Naive thymus-derived CD4-positive, alpha-beta T cell (primary cell): ENCODE measurements at regions of chr3 and their contacts with region 1.

Region 1: DNA sequence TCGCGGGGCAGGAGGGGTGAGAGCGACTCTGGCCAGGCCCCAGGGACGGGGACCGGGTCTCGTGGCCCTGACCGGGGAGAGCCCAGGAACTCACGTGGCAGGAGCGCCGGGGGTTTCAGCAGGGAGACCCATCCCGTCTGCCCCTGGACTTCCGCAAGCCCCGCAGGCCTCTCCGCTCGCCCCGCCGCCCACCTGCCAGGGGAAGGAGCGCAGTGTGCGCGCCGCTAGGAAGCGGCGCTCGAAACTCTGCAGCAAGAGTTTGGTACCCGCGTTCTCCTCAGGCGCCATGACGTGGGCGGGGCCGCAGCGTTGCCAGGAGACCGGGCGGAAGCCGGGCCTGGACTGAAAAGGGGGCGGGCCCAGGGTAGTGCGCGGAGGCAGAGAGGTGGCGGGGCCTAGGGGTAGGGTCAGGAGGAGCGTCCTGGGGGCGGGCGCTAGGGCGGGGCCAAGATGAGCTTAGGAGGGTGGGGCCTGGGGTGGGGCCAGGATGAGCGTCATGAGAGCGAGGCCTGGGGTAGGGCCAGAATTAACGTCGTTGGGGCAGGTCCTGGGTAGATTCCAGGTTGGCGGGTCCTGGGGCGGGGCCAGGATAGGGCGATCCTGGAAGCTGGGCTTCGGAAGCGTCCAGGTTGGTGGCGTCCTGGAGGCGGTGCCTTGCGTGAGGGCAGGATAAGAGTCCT is 29.7 kb downstream of the ALG1L2 start:
- DNase-seq: peak; percentile 96 to 99 (median 98)
- ATAC-seq: peak; percentile 100
- H3K4me3 ChIP-seq: peak overlapping the region; percentile 58
- H3K4me3 Mint-ChIP-seq: peak overlapping the region; percentile 85 to 100 (median 98)
- H3K27ac ChIP-seq: peak overlapping the region; percentile 90
- H3K27ac Mint-ChIP-seq: peak overlapping the region; percentile 91 to 100 (median 100)
- H3K4me1 ChIP-seq: no peaks in the 10 kb centered on the region
- H3K4me1 Mint-ChIP-seq: peaks cover 11 to 22% (median 13%) of the 10 kb centered on the region in 7 donors
- H3K27me3 ChIP-seq: no peaks in the 10 kb centered on the region
- H3K27me3 Mint-ChIP-seq: peaks cover 0 to 14% (median 0%) of the 10 kb centered on the region in 5 donors

Region 2: GRCh38 chr3:129399145-129399894 is 712.0 kb before region 1 on chr3:
- CTCF ChIA-PET with region 1: no interaction called
- POLR2A ChIA-PET with region 1: no interaction called
- intact Hi-C with region 1: loop called in 1 of 2 experiments (anchors 1 kb)
- DNase-seq: peak; percentile 34 to 89 (median 81)
- ATAC-seq: peak; percentile 91
- H3K4me3 ChIP-seq: peak overlapping the region; percentile 70
- H3K4me3 Mint-ChIP-seq: peak overlapping the region; percentile 89 to 100 (median 97)
- H3K27ac ChIP-seq: peak overlapping the region; percentile 88
- H3K27ac Mint-ChIP-seq: peak overlapping the region; percentile 94 to 100 (median 98)
- H3K4me1 ChIP-seq: peaks cover 10 to 13% of the 10 kb centered on the region in 2 donors
- H3K4me1 Mint-ChIP-seq: peaks cover 23 to 47% (median 37%) of the 10 kb centered on the region in 7 donors
- H3K27me3 ChIP-seq: no peaks in the 10 kb centered on the region
- H3K27me3 Mint-ChIP-seq: no peaks in the 10 kb centered on the region

Region 3: GRCh38 chr3:129606636-129607390 is 504.5 kb before region 1 on chr3 and contains the start of gene PLXND1:
- CTCF ChIA-PET with region 1: no interaction called
- POLR2A ChIA-PET with region 1: no interaction called
- intact Hi-C with region 1: loop called in 1 of 2 experiments (anchors 5 kb)
- DNase-seq: peak in 5 of 9 donors; percentile 14 to 49 (median 25)
- ATAC-seq: peak; percentile 76
- H3K4me3 ChIP-seq: peak within 1 kb of the TSS; percentile 53
- H3K4me3 Mint-ChIP-seq: peak within 1 kb of the TSS; percentile 89 to 98 (median 93)
- H3K27ac ChIP-seq: peak within 1 kb of the TSS; percentile 51
- H3K27ac Mint-ChIP-seq: peak within 1 kb of the TSS; percentile 35 to 92 (median 84)
- H3K4me1 ChIP-seq: peaks cover 0 to 6% of the 10 kb centered on the region in 2 donors
- H3K4me1 Mint-ChIP-seq: peaks cover 11 to 25% (median 14%) of the 10 kb centered on the region in 7 donors
- H3K27me3 ChIP-seq: peaks cover 0 to 6% of the 10 kb centered on the region in 2 donors
- H3K27me3 Mint-ChIP-seq: peaks cover 8 to 64% (median 11%) of the 10 kb centered on the region in 5 donors
- total RNA-seq, gene PLXND1: 1.9 to 82.5 (median 7.5) TPM

Region 4: DNA sequence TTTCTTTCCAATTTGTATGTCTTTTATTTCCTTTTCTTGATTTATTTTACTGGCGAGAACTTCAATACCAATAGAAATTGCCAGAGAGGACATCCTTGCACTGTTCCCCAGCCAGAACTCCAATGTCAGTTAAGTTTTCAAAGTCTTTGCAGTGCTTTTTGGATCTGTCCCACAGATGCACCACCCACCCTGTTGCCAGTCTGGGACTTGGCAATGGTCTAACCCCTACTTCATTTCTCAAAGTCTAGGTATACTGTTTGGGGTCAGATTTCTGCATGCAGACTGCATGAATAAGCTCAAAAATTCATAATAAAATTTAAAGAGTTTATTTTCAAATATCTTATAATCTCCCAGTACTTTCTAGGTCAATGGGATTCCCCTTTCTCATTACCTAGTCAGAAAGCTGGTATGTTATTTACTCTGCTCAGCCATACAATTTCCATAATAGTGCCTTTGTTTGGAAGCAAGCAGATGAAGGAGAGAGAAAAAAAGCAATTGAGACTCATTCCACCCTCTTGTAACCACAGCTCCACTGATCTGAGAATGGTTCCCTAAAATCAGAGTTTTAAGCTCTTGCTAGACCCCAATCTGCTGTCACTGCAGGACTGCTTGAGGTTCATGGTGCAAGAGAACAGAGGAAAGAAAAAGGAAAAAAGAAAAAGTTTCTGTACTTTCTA is 379.0 kb before region 1 on chr3:
- CTCF ChIA-PET with region 1: no interaction called
- POLR2A ChIA-PET with region 1: no interaction called
- intact Hi-C with region 1: no loop called
- DNase-seq: no peak
- ATAC-seq: no peak
- H3K4me3 ChIP-seq: no peak overlapping the region
- H3K4me3 Mint-ChIP-seq: no peak overlapping the region
- H3K27ac ChIP-seq: no peak overlapping the region
- H3K27ac Mint-ChIP-seq: no peak overlapping the region
- H3K4me1 ChIP-seq: no peaks in the 10 kb centered on the region
- H3K4me1 Mint-ChIP-seq: no peaks in the 10 kb centered on the region
- H3K27me3 ChIP-seq: no peaks in the 10 kb centered on the region
- H3K27me3 Mint-ChIP-seq: no peaks in the 10 kb centered on the region

Region 5: GRCh38 chr3:129942296-129942695 is 169.0 kb before region 1 on chr3:
- CTCF ChIA-PET with region 1: no interaction called
- POLR2A ChIA-PET with region 1: no interaction called
- intact Hi-C with region 1: loop called in 1 of 2 experiments (anchors 5 kb)
- DNase-seq: peak in 3 of 9 donors; percentile 14 to 18 (median 17)
- ATAC-seq: peak; percentile 78
- H3K4me3 ChIP-seq: no peak overlapping the region
- H3K4me3 Mint-ChIP-seq: no peak overlapping the region
- H3K27ac ChIP-seq: no peak overlapping the region
- H3K27ac Mint-ChIP-seq: peak overlapping the region in 1 of 9 donors; percentile 43
- H3K4me1 ChIP-seq: no peaks in the 10 kb centered on the region
- H3K4me1 Mint-ChIP-seq: peaks cover 0 to 3% (median 0%) of the 10 kb centered on the region in 7 donors
- H3K27me3 ChIP-seq: no peaks in the 10 kb centered on the region
- H3K27me3 Mint-ChIP-seq: peaks cover 0 to 15% (median 4%) of the 10 kb centered on the region in 5 donors

Region 6: DNA sequence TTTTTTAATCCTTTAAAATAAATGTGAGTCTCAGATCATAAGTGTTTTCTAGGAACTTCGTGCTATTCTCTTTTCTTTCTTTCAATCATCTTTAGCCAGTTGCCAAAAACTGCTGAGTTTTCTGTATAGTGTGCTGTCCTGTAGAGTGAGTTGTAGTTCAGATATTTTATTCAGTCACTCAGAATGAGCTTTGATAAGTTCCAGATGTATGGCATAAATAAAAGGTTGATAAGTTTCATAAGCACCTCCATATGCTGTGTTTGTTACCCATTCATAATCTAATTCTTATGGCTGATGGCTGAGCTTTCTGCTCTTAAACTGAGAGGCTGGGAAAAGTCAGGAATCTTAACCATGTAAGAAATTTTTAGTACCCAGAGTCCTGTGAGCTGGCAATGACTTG is 346.3 kb after region 1 on chr3:
- CTCF ChIA-PET with region 1: no interaction called
- POLR2A ChIA-PET with region 1: no interaction called
- intact Hi-C with region 1: no loop called
- DNase-seq: no peak
- ATAC-seq: no peak
- H3K4me3 ChIP-seq: no peak overlapping the region
- H3K4me3 Mint-ChIP-seq: no peak overlapping the region
- H3K27ac ChIP-seq: no peak overlapping the region
- H3K27ac Mint-ChIP-seq: no peak overlapping the region
- H3K4me1 ChIP-seq: no peaks in the 10 kb centered on the region
- H3K4me1 Mint-ChIP-seq: no peaks in the 10 kb centered on the region
- H3K27me3 ChIP-seq: no peaks in the 10 kb centered on the region
- H3K27me3 Mint-ChIP-seq: peaks cover under 1 to 16% (median 3%) of the 10 kb centered on the region in 5 donors